ENCODE measurements at regions of chr6 and their contacts with region 1.

Region 1: GRCh38 chr6:42279144-42279781 is 61.6 kb upstream of the MRPS10 start:
- DNase-seq: no peak
- H3K4me3 Mint-ChIP-seq: no peak overlapping the region
- H3K27ac Mint-ChIP-seq: peak overlapping the region; percentile 39
- H3K4me1 Mint-ChIP-seq: peaks cover 34% of the 10 kb centered on the region
- H3K27me3 Mint-ChIP-seq: no peaks in the 10 kb centered on the region

Region 2: DNA sequence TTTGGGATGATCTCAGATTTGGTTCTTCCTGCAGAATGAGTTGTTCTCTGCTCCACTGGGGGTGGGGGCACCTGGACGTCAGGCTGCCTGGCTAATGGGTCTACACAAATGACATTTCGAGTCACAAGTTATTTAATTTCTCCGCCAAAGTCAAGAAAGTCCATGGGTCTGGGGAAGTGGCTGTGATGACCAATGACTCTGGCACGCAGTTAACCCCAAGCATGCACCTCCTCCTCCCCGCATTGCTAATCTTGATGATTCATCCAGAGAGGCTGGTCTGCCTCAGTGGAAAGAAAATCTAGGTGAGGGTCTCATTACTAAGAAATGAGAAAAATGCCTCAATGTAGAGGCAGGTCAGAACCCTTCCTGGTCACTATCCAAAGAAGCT is 36.7 kb after region 1 on chr6:
- intact Hi-C with region 1: loop called (anchors 5 kb)
- DNase-seq: no peak
- H3K4me3 Mint-ChIP-seq: peak overlapping the region; percentile 7
- H3K27ac Mint-ChIP-seq: peak overlapping the region; percentile 85
- H3K4me1 Mint-ChIP-seq: peaks cover 47% of the 10 kb centered on the region
- H3K27me3 Mint-ChIP-seq: no peaks in the 10 kb centered on the region

Region 3: DNA sequence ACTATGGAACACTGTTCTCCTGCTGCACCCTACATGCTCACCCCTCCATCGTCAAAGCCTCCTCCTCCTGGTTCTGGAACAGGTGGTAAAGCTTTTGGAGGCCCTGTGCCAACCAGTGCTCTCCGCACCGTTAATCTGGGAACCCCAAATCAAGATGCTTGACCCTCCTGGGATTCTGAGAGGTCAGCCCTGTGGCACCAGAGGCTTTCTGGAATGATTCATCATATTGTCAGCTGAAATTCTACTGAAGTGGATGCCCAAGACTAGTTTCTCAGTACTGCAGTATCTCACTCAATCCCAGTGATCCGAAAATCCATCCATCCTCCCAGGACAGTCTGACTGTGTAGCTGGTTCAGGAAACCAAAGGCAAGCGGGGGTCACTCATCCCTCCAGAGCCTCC is 79.8 kb after region 1 on chr6:
- intact Hi-C with region 1: loop called (anchors 5 kb)
- DNase-seq: no peak
- H3K4me3 Mint-ChIP-seq: no peak overlapping the region
- H3K27ac Mint-ChIP-seq: no peak overlapping the region
- H3K4me1 Mint-ChIP-seq: peaks cover 20% of the 10 kb centered on the region
- H3K27me3 Mint-ChIP-seq: no peaks in the 10 kb centered on the region

Region 4: DNA sequence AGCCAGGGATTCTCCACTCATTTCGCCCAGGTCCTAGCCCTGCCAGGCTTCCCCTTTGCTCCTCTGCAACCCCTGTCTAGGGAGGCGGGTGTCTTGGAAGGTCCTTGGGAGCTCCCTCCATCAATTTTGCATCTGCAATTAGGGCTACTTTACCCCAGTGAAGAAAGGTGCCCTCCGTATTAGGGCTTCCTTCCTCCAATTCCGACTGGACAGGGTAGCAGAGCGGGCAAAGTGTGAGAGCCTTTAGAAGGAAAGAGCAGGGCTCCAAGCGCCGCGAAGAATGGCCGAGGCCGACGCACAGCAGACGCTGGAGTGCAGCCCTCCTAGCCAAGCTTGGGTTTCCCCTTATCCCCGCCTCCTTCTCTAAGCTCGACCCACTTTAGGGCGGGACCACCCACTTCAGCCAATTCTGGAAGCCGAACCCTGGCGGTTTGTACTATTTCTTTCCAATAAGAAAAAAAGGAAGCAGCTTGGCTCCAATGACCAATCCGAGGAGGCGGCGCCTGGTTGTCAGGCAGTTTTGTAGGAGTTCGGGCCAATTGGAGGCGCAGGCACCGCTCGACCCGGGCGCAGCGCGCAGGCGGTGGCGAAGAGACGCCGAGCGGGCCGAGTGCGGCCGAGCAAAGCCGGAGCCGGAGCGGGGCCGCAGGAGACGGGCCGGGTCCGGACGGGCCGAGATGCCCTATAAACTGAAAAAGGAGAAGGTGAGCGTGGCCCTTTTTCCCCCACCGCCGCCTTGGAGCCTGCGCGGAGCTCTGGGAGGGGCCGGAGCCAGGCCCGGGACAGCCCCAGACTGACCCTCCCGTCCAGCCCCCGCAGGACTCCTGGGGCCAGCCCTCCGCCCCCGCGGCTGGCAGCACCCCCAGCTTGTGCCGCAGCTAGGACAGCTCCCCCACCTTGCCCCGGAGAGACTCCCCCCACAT is 705.0 kb after region 1 on chr6 and contains the start of gene PPP2R5D:
- intact Hi-C with region 1: no loop called
- DNase-seq: peak; percentile 99
- H3K4me3 Mint-ChIP-seq: peak within 1 kb of the TSS; percentile 98
- H3K27ac Mint-ChIP-seq: peak within 1 kb of the TSS; percentile 91
- H3K4me1 Mint-ChIP-seq: peaks cover 54% of the 10 kb centered on the region
- H3K27me3 Mint-ChIP-seq: no peaks in the 10 kb centered on the region
- total RNA-seq, gene PPP2R5D: 54.2 and 54.6 TPM in 2 replicates